ENCODE measurements at regions of chr19 and their contacts with region 1.

Region 1: DNA sequence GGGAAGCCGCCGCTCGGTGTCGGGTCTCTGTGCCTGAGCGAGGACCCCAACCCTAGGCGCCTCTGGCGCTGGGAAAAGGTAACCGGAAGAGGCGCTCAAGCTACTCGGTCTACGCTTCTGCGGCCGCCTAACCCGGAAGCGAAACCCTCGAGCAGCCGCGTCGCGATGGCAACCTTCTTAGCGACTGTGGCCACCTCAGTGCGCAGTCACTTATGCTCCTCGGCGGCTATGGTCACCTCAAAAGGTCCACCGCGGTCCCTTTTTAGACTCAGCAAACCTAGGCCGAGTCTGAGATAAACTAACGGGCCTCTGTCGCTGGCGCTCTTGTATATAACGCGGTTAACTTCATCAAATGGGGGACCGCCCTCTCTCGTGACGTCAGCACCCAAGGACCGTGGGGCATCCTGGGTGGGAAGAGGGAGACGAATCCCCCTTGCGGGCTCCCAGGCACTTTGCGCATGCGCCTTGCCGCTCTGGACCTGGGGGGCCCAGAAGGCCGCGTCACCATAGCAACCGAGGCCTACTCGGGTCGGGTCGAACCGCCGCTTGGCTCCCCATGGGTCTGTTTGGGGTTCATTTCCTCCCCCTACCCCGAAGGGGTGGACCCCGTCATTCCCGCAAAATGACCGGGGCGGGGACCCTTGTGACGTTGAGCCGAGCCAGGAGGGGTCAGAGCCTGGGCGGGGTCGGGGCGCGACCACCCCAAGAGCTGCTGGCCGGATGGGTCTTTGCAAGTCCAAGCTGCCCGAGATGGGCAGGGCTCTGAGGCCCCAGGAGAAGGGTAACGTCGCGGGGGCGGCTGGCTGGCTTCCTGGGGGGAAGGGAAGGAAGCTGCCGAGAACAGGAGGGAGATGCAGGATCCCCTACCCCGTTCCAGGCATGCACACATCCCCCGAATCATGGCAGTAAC is at the start of gene GTF2F1:
- DNase-seq: peak; percentile 92
- ATAC-seq: peak; percentile 85
- H3K4me3 Mint-ChIP-seq: peak within 1 kb of the TSS; percentile 94
- H3K27ac Mint-ChIP-seq: peak within 1 kb of the TSS; percentile 94
- H3K4me1 Mint-ChIP-seq: peaks cover 23% of the 10 kb centered on the region
- H3K27me3 Mint-ChIP-seq: no peaks in the 10 kb centered on the region
- CTCF ChIP-seq: no peak
- total RNA-seq, gene GTF2F1: 67.6 and 68.1 TPM in 2 replicates

Region 2: DNA sequence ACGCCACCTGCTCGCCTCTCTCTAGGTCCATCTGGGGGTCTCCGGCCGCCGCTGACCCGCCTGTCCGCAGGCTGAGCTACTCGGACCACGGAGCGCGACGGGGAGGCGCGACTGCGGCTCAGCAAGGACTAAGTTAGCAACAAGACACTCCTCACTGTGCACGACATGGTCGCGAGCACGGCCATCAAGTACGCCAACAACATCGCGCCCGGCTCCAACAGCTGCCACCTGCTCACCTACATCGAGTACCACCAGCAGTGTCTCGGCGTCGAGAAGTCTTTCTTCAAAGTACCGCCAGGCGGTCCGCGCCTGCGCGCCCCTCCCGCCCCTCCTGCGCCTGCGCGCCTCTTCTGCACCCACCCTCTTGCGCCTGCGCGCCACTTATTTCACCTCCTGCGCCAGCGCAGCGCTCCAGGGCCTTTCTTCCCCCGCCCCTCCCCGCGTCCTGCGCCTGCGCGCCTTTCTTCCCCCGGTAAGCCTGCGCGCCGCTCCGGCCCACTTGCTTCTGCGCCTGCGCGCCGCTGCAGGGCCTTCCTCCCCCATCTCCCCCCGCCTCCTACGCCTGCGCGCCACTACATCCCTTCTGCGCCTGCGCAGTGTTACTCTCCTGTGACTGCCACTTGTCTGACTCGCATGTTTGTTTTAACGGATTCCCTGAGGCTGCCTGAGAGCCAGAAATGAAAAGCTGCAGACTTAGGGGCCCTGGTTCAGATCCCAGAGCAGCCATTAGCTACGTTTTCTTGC is 193.9 kb before region 1 on chr19:
- CTCF ChIA-PET with region 1: no interaction called
- POLR2A ChIA-PET with region 1: no interaction called
- intact Hi-C with region 1: loop called (anchors 1 kb)
- DNase-seq: peak; percentile 99
- ATAC-seq: peak; percentile 86
- H3K4me3 Mint-ChIP-seq: peak overlapping the region; percentile 95
- H3K27ac Mint-ChIP-seq: peak overlapping the region; percentile 85
- H3K4me1 Mint-ChIP-seq: peaks cover 33% of the 10 kb centered on the region
- H3K27me3 Mint-ChIP-seq: no peaks in the 10 kb centered on the region
- CTCF ChIP-seq: no peak

Region 3: GRCh38 chr19:6312018-6312417 is 81.3 kb before region 1 on chr19:
- CTCF ChIA-PET with region 1: no interaction called
- POLR2A ChIA-PET with region 1: no interaction called
- intact Hi-C with region 1: no loop called
- DNase-seq: no peak
- ATAC-seq: no peak
- H3K4me3 Mint-ChIP-seq: no peak overlapping the region
- H3K27ac Mint-ChIP-seq: no peak overlapping the region
- H3K4me1 Mint-ChIP-seq: no peaks in the 10 kb centered on the region
- H3K27me3 Mint-ChIP-seq: peaks cover 6% of the 10 kb centered on the region
- CTCF ChIP-seq: no peak

Region 4: GRCh38 chr19:6362027-6362350 is 31.3 kb before region 1 on chr19:
- CTCF ChIA-PET with region 1: no interaction called
- POLR2A ChIA-PET with region 1: no interaction called
- intact Hi-C with region 1: loop called (anchors 1 kb)
- DNase-seq: no peak
- ATAC-seq: no peak
- H3K4me3 Mint-ChIP-seq: peak overlapping the region; percentile 87
- H3K27ac Mint-ChIP-seq: peak overlapping the region; percentile 78
- H3K4me1 Mint-ChIP-seq: peaks cover 11% of the 10 kb centered on the region
- H3K27me3 Mint-ChIP-seq: no peaks in the 10 kb centered on the region
- CTCF ChIP-seq: no peak

Region 5: DNA sequence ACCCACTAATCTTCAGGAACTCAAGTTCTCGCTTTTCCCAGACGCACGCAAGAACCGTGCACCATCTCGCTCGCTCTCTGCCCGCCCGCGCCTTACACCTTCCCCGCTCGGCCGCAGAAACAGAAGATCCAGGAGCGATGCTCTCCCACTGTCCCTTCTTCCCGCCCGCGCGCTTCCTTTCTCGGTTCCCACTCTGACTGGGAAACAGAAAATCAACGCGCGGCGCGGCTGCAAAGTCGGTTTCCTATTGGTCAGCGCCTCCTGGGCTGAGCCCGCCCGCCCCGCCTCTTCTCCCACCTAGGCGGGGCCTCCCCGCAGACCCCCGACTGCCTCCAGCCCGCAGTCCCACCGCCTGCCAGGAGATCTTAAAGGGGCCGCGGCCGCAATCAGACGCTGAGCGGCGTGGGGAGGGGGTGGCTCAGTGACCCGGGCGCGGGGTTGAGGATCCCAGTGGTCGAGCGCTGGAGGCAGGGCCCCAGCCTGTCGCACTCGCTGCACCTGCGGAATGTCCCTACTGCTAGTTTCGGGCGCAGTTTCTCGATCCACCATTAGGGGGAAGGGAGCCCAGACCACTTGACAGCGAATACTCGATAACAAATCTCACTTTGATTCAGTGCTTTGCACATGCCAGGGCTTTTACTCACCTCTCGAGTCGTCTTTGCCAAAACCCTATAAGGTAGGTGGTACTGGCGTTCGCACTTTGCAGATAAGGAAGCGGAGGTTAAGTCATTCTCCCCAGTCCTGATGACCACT is 66.9 kb after region 1 on chr19:
- CTCF ChIA-PET with region 1: no interaction called
- POLR2A ChIA-PET with region 1: interaction called, 9 read pairs
- intact Hi-C with region 1: loop called (anchors 1 kb)
- DNase-seq: peak; percentile 90
- ATAC-seq: peak; percentile 82
- H3K4me3 Mint-ChIP-seq: peak overlapping the region; percentile 90
- H3K27ac Mint-ChIP-seq: peak overlapping the region; percentile 79
- H3K4me1 Mint-ChIP-seq: peaks cover 42% of the 10 kb centered on the region
- H3K27me3 Mint-ChIP-seq: peaks cover 3% of the 10 kb centered on the region
- CTCF ChIP-seq: no peak

Region 6: GRCh38 chr19:6501740-6502648 is 108.7 kb after region 1 on chr19 and contains the start of gene TUBB4A:
- CTCF ChIA-PET with region 1: no interaction called
- POLR2A ChIA-PET with region 1: no interaction called
- intact Hi-C with region 1: loop called (anchors 2 kb)
- DNase-seq: peak; percentile 65
- ATAC-seq: peak; percentile 78
- H3K4me3 Mint-ChIP-seq: peak within 1 kb of the TSS; percentile 87
- H3K27ac Mint-ChIP-seq: no peak within 1 kb of the TSS
- H3K4me1 Mint-ChIP-seq: peaks cover 23% of the 10 kb centered on the region
- H3K27me3 Mint-ChIP-seq: peaks cover 4% of the 10 kb centered on the region
- CTCF ChIP-seq: no peak
- total RNA-seq, gene TUBB4A: 13.2 and 16.8 TPM in 2 replicates

Region 7: GRCh38 chr19:7450243-7451223 is 1057.2 kb after region 1 on chr19:
- CTCF ChIA-PET with region 1: no interaction called
- POLR2A ChIA-PET with region 1: interaction called, 17 read pairs
- intact Hi-C with region 1: no loop called
- DNase-seq: no peak
- ATAC-seq: no peak
- H3K4me3 Mint-ChIP-seq: no peak overlapping the region
- H3K27ac Mint-ChIP-seq: peak overlapping the region; percentile 30
- H3K4me1 Mint-ChIP-seq: no peaks in the 10 kb centered on the region
- H3K27me3 Mint-ChIP-seq: no peaks in the 10 kb centered on the region
- CTCF ChIP-seq: no peak

Measured in activated B cell treated with CpG ODN at 0.5 μM for 24 hours (primary cell).